ENCODE measurements at regions of chr6 and their contacts with region 1.

Region 1: GRCh38 chr6:27753668-27754407 is 158.4 kb downstream of the OR2B2 start:
- DNase-seq: peak; percentile 92
- ATAC-seq: peak; percentile 70
- H3K4me3 ChIP-seq: peak overlapping the region; percentile 82
- H3K27ac ChIP-seq: no peak overlapping the region
- H3K4me1 ChIP-seq: peaks cover 15% of the 10 kb centered on the region
- H3K27me3 ChIP-seq: no peaks in the 10 kb centered on the region
- CTCF ChIP-seq: 0 out of 2 replicates have a peak, but pooled peaks have one; percentile 11

Region 2: DNA sequence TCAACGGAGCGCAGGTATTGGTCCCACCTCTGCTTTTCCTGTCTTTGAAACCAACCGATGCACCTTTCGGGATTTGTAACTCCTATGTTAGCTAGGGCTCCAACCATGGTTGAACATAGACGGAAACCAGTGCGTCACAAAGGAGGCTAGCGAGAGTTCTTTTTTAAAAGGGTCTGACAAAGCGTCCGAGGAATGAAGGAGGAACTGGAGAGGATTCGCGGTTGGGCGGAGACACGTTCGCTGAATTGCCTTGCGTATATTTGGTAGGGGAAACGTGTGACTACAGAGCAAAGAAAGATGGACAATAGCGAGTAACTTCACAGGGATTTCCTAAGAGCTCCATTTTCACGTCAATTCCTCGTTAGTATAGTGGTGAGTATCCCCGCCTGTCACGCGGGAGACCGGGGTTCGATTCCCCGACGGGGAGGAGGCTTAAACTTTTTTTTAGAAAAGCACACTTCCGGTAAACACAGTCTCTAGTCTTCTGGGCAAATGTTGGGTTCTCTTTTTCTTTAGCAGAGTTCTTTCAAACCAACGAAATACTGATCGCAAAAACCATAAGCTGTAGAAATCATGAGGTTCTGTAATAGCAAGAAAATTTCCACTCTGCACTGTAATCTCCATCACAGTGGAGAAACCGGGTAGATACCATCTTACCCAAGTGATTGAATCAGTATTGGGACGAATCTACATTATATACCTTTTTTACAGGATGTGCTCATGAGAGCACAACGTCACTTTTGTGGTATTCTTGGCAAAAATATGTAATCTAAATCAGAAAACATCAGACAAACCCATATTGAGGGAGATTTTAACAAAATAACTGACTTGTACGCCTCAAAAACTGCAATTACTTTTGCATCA is 274.3 kb before region 1 on chr6:
- CTCF ChIA-PET with region 1: no interaction called
- POLR2A ChIA-PET with region 1: no interaction called
- intact Hi-C with region 1: loop called (anchors 2 kb)
- DNase-seq: peak; percentile 89
- ATAC-seq: peak; percentile 71
- H3K4me3 ChIP-seq: peak overlapping the region; percentile 83
- H3K27ac ChIP-seq: peak overlapping the region; percentile 81
- H3K4me1 ChIP-seq: peaks cover 8% of the 10 kb centered on the region; the same call in 1 of the 2 replicates
- H3K27me3 ChIP-seq: no peaks in the 10 kb centered on the region
- CTCF ChIP-seq: no peak

Region 3: DNA sequence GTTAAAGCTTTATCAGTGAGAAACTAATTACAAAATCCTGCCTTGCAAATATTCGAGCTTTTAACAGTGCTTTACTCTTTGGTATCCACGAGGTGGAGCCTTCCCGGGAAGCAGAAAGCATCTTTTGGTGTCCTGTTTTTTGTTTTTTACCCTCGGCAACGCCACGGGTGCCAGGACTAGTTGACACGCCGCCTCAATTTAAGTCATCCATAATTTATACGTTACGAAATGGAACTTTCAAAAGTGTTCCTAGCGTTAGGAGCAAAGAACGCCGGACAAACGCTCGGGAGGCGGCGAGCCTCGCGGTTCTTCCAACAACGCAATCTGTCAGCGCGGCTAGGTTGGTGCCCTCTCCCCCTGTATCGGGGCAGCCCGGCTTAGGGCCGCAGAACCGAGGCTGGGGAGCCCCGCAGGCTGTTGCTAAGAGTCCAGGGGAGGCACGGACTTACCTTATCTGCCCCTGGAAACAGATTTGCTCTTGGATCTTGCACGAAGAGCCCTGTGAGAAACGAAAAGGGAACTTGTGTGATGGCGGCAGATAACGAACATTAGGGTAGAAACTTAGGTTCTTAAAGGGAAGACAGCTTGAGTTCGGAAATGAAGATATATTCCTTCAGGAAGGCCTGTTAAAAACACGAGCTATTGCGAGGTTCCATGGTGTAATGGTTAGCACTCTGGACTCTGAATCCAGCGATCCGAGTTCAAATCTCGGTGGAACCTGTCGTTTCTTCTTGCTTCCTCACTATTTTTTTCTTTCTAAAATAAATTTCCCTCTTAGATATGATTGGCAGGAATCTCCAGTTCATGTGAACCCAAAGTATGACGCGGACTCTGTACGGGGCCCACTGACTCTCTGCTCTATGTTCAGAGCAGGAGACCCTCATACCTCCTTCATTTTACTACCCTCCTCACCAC is 234.7 kb before region 1 on chr6:
- CTCF ChIA-PET with region 1: interaction called, 21 read pairs
- POLR2A ChIA-PET with region 1: no interaction called
- intact Hi-C with region 1: loop called (anchors 1 kb)
- DNase-seq: peak; percentile 96
- ATAC-seq: peak; percentile 73
- H3K4me3 ChIP-seq: peak overlapping the region; percentile 89
- H3K27ac ChIP-seq: peak overlapping the region; percentile 31; the same call in 1 of the 2 replicates
- H3K4me1 ChIP-seq: peaks cover 5% of the 10 kb centered on the region; the same call in 1 of the 2 replicates
- H3K27me3 ChIP-seq: no peaks in the 10 kb centered on the region
- CTCF ChIP-seq: peak; percentile 88

Region 4: GRCh38 chr6:27617700-27618689 is 135.8 kb before region 1 on chr6:
- CTCF ChIA-PET with region 1: interaction called, 17 read pairs
- POLR2A ChIA-PET with region 1: interaction called, 9 read pairs
- intact Hi-C with region 1: loop called (anchors 5 kb)
- DNase-seq: peak; percentile 73
- ATAC-seq: peak; percentile 91
- H3K4me3 ChIP-seq: peak overlapping the region; percentile 84
- H3K27ac ChIP-seq: no peak overlapping the region
- H3K4me1 ChIP-seq: peaks cover 8% of the 10 kb centered on the region; the same call in 1 of the 2 replicates
- H3K27me3 ChIP-seq: no peaks in the 10 kb centered on the region
- CTCF ChIP-seq: peak; percentile 42

Region 5: DNA sequence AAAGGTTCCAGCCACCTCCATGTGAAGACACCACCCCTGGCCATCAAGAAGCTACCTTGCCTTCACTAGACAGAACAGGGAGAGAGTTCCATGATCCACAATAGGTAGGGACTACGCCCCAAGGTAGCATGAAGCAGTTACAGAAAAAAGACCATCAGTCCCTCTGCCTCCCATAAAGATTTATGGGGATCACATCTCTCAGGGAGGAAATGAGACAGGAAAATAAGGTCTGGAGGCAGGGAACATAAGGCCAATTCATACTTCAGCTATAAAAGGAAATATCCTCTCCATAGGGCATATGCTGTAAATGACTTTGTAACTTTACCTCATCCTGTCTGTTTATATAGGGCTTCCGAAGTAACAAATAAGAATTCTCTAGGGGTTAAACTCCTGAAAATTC is 28.9 kb after region 1 on chr6:
- CTCF ChIA-PET with region 1: no interaction called
- POLR2A ChIA-PET with region 1: no interaction called
- intact Hi-C with region 1: no loop called
- DNase-seq: no peak
- ATAC-seq: no peak
- H3K4me3 ChIP-seq: no peak overlapping the region
- H3K27ac ChIP-seq: no peak overlapping the region
- H3K4me1 ChIP-seq: peaks cover 26% of the 10 kb centered on the region
- H3K27me3 ChIP-seq: no peaks in the 10 kb centered on the region
- CTCF ChIP-seq: no peak

Region 6: DNA sequence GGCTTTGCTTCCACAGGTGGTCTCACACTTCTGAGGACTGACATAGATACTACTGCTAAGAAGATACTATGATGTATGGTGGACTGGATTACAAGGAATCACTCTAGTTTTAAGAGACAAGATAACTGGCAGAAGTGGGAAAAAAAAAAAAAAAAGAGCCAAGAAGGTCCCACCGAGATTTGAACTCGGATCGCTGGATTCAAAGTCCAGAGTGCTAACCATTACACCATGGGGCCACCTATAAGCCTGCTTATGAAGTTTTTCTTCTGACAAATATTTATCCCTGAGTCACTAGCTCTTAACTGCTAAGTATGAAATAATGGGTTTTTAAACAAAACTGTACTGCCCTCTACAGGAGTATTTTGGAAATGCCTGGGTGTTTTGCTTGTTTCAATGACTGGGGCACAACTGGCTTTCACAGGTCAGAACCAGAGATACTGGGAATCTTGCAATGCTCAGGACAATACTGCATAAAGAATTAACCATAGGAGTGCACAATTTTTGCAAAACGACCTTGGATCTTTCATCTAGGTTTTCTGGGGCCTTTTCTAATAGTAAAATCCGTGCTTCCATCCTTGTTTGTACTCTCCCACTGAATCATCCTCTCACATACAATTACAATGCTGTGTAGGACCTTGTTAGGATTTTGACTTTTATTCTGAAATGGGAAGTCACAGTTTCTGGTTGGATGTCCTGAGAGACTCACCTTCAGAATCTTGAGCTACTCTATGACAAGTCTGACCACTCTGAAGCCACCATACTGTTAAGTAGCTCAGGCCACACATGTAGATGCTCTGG is 42.1 kb after region 1 on chr6:
- CTCF ChIA-PET with region 1: interaction called, 12 read pairs
- POLR2A ChIA-PET with region 1: no interaction called
- intact Hi-C with region 1: loop called (anchors 1 kb)
- DNase-seq: peak; percentile 99
- ATAC-seq: peak; percentile 26
- H3K4me3 ChIP-seq: peak overlapping the region; percentile 16; the same call in 1 of the 2 replicates
- H3K27ac ChIP-seq: no peak overlapping the region
- H3K4me1 ChIP-seq: peaks cover 13% of the 10 kb centered on the region; the same call in 1 of the 2 replicates
- H3K27me3 ChIP-seq: no peaks in the 10 kb centered on the region
- CTCF ChIP-seq: peak; percentile 81

Region 7: GRCh38 chr6:27847706-27848105 is 93.9 kb after region 1 on chr6:
- CTCF ChIA-PET with region 1: no interaction called
- POLR2A ChIA-PET with region 1: no interaction called
- intact Hi-C with region 1: no loop called
- DNase-seq: peak; percentile 45
- ATAC-seq: peak; percentile 78
- H3K4me3 ChIP-seq: no peak overlapping the region
- H3K27ac ChIP-seq: peak overlapping the region; percentile 74
- H3K4me1 ChIP-seq: peaks cover 16% of the 10 kb centered on the region
- H3K27me3 ChIP-seq: no peaks in the 10 kb centered on the region
- CTCF ChIP-seq: no peak

Measured in PC-3 (cell line).